GM10248 (cell line): ENCODE measurements at regions of chr12 and their contacts with region 1.

Region 1: GRCh38 chr12:112900299-112901145 is 6.2 kb upstream of the OAS1 start:
- DNase-seq: peak; percentile 62
- CTCF ChIP-seq: peak; percentile 74

Region 2: DNA sequence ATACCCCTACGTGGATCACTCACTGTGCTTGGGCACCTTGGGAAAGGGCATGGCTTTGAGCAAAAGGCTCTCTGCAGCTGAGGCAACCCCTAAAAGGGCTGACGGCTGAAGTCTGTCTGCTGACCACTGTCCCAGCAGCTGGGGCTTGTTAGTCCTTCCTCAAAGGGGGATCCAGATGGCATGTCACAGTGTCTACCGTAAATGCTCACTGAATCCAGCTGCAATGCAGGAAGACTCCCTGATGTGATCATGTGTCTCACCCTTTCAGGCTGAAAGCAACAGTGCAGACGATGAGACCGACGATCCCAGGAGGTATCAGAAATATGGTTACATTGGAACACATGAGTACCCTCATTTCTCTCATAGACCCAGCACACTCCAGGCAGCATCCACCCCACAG is 18.6 kb after region 1 on chr12:
- CTCF ChIA-PET with region 1: interaction called, 12 read pairs
- POLR2A ChIA-PET with region 1: no interaction called
- DNase-seq: no peak
- CTCF ChIP-seq: no peak

Region 3: GRCh38 chr12:112924986-112925385 is 24.5 kb after region 1 on chr12:
- CTCF ChIA-PET with region 1: interaction called, 12 read pairs
- POLR2A ChIA-PET with region 1: no interaction called
- DNase-seq: peak; percentile 52
- CTCF ChIP-seq: no peak

Region 4: GRCh38 chr12:112937741-112938719 is 37.5 kb after region 1 on chr12 and contains the start of gene OAS3:
- CTCF ChIA-PET with region 1: interaction called, 11 read pairs
- POLR2A ChIA-PET with region 1: no interaction called
- DNase-seq: peak; percentile 69
- CTCF ChIP-seq: no peak

Region 5: GRCh38 chr12:112950701-112951100 is 50.2 kb after region 1 on chr12:
- CTCF ChIA-PET with region 1: interaction called, 10 read pairs
- POLR2A ChIA-PET with region 1: no interaction called
- DNase-seq: no peak
- CTCF ChIP-seq: no peak

Region 6: DNA sequence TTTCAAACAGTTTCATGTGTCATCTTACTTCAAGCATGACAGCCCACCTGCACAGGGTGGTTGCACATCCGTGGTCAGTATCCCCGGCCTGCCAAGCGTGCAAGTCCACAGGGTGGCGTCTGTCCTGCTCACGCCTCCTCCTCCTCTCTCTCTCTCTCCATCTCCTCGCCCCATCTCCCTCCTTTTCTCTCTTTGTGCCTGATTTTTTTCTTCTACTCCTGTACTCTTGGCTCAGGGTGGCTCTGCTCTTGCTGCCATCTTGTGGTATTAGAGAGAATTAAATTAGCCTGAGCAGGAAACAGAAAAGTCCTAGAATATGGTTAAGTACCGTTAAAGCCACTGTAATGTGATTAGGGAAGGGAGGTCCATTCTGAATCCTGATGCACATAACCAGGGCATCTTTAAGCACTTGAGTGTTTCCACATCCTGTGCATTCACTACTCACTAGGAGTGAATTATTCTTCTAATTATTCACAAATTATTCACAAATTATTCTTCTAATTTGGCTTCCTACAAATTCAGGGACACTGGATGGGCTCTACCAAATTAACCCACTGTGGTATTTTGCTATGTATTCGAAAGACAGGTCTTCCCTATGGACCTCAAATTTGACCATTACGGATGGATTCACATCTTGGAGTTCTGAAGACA is 130.5 kb after region 1 on chr12:
- CTCF ChIA-PET with region 1: interaction called, 15 read pairs
- POLR2A ChIA-PET with region 1: no interaction called
- DNase-seq: peak; percentile 59
- CTCF ChIP-seq: peak; percentile 65